Activated CD8-positive, alpha-beta T cell treated with anti-CD3 and anti-CD28 coated beads for 36 hours (primary cell): ENCODE measurements at regions of chr3 and their contacts with region 1.

Region 1: DNA sequence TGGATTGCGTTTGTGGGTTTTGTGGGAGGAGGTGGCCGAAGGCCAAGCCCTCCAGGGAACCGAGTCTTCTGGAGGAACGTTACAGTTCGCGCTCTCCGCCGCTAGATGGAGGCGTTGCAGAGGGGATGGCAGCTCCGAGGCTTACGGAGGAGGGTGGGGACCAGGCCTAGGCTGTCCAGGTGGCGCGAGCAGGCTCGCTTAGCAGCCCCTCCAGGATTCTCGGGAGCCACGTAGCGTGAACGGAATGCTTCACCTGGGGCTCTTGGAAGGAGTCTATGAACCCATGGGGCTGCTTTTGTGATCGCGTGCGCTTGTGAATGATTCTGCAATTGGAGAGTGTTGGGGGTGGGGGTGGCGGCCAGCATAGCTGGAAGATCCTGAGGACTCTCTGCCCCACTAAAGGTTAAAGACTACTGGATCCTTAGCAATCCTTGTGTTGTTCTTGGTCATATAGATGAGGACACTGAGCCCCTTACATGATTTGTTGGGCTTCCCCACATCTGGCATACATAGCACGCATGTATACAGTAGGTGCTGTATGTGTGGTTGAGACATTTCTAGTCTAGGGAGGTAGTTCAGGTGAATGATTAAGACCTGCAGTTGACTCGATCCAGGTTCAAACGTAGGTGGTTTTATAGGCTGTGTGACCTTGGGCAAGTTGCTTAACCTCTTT is 25.7 kb downstream of the FAM3D start:
- DNase-seq: peak; percentile 71
- ATAC-seq: peak; percentile 98
- H3K4me3 Mint-ChIP-seq: no peak overlapping the region
- H3K27ac Mint-ChIP-seq: no peak overlapping the region
- H3K4me1 Mint-ChIP-seq: no peaks in the 10 kb centered on the region
- H3K27me3 Mint-ChIP-seq: no peaks in the 10 kb centered on the region
- CTCF ChIP-seq: peak; percentile 91

Region 2: GRCh38 chr3:58617338-58617761 is 23.5 kb before region 1 on chr3:
- CTCF ChIA-PET with region 1: interaction called, 15 read pairs
- POLR2A ChIA-PET with region 1: interaction called, 5 read pairs
- intact Hi-C with region 1: no loop called
- DNase-seq: no peak
- ATAC-seq: no peak
- H3K4me3 Mint-ChIP-seq: no peak overlapping the region
- H3K27ac Mint-ChIP-seq: no peak overlapping the region
- H3K4me1 Mint-ChIP-seq: no peaks in the 10 kb centered on the region
- H3K27me3 Mint-ChIP-seq: no peaks in the 10 kb centered on the region
- CTCF ChIP-seq: no peak

Region 3: GRCh38 chr3:59052803-59053411 is 412.1 kb after region 1 on chr3:
- CTCF ChIA-PET with region 1: interaction called, 37 read pairs
- POLR2A ChIA-PET with region 1: no interaction called
- intact Hi-C with region 1: loop called (anchors 2 kb)
- DNase-seq: peak; percentile 28
- ATAC-seq: no peak
- H3K4me3 Mint-ChIP-seq: no peak overlapping the region
- H3K27ac Mint-ChIP-seq: no peak overlapping the region
- H3K4me1 Mint-ChIP-seq: peaks cover 3% of the 10 kb centered on the region
- H3K27me3 Mint-ChIP-seq: peaks cover 4% of the 10 kb centered on the region
- CTCF ChIP-seq: peak; percentile 66